Heart right ventricle (tissue), 16 donors: ENCODE measurements at regions of chr18 and their contacts with region 1.

Region 1: GRCh38 chr18:1585879-1586488 is 681.3 kb downstream of the ADCYAP1 start:
- DNase-seq: no peak
- ATAC-seq: peak in 2 of 8 donors; percentile 51 to 76
- H3K4me3 ChIP-seq: no peak overlapping the region
- H3K27ac ChIP-seq: no peak overlapping the region
- H3K4me1 ChIP-seq: no peaks in the 10 kb centered on the region
- H3K27me3 ChIP-seq: peaks cover 0 to 8% (median 0%) of the 10 kb centered on the region in 7 donors
- CTCF ChIP-seq: peak in 8 of 9 donors; percentile 30 to 69 (median 60)

Region 2: DNA sequence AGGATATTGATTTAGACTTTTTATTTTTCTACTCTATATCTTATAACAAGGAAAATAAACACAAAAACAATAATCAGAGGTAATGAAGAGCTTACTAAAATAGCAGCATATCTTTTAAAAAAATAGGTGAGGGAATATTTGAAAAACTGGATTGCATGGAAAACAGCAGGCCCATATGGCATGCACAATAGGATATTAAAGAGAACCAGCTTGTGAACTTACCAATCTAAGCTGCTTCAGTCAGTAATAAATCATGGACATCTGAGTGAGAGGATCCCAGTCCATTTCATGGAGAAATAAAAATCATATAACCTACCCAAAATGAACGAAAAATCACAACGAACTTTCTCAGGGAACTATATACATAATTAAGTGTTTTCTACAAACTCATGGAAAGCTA is 46.7 kb before region 1 on chr18:
- intact Hi-C with region 1: no loop called
- DNase-seq: no peak
- ATAC-seq: no peak
- H3K4me3 ChIP-seq: no peak overlapping the region
- H3K27ac ChIP-seq: no peak overlapping the region
- H3K4me1 ChIP-seq: no peaks in the 10 kb centered on the region
- H3K27me3 ChIP-seq: peaks cover 0 to 4% (median 0%) of the 10 kb centered on the region in 7 donors
- CTCF ChIP-seq: no peak

Region 3: GRCh38 chr18:1663879-1664705 is 78.1 kb after region 1 on chr18:
- intact Hi-C with region 1: loop called in 2 of 10 experiments (anchors 10 kb)
- DNase-seq: peak; percentile 15 to 35
- ATAC-seq: peak in 4 of 8 donors; percentile 23 to 43 (median 32)
- H3K4me3 ChIP-seq: no peak overlapping the region
- H3K27ac ChIP-seq: no peak overlapping the region
- H3K4me1 ChIP-seq: peaks cover 0 to 10% (median 4%) of the 10 kb centered on the region in 9 donors
- H3K27me3 ChIP-seq: no peaks in the 10 kb centered on the region
- CTCF ChIP-seq: peak in 8 of 9 donors; percentile 30 to 72 (median 50)

Region 4: GRCh38 chr18:2104620-2105462 is 518.9 kb after region 1 on chr18:
- intact Hi-C with region 1: loop called in 1 of 10 experiments (anchors 10 kb)
- DNase-seq: peak; percentile 25 to 41
- ATAC-seq: peak in 4 of 8 donors; percentile 58 to 76 (median 66)
- H3K4me3 ChIP-seq: no peak overlapping the region
- H3K27ac ChIP-seq: no peak overlapping the region
- H3K4me1 ChIP-seq: no peaks in the 10 kb centered on the region
- H3K27me3 ChIP-seq: peaks cover 0 to under 1% (median 0%) of the 10 kb centered on the region in 7 donors
- CTCF ChIP-seq: peak; percentile 27 to 83 (median 68)

Region 5: DNA sequence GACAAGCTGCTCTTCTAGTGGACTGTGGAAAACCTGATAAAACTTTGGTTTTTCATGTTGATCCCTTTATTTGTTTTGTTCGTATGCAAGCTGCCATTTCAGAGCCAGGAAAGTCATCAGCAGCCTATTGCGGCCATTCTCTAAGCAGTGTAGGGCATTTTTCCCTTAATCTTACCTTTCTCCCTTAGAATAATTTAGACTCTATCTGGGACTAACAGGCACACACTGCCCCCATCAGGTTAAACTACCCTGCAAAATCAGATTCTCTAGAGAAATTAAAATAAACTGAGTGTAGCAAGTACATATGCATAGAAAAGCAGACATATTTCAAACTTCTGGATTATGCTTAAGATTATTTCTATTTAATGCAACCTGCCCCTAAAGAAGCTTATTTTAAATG is 637.9 kb after region 1 on chr18:
- intact Hi-C with region 1: loop called in 9 of 10 experiments (anchors 5 to 10 kb)
- DNase-seq: peak in 1 of 2 donors; percentile 26
- ATAC-seq: peak in 1 of 8 donors; percentile 51
- H3K4me3 ChIP-seq: peak overlapping the region in 6 of 10 donors; percentile 6 to 40 (median 29)
- H3K27ac ChIP-seq: no peak overlapping the region
- H3K4me1 ChIP-seq: no peaks in the 10 kb centered on the region
- H3K27me3 ChIP-seq: peaks cover 0 to 7% (median 0%) of the 10 kb centered on the region in 7 donors
- CTCF ChIP-seq: peak; percentile 23 to 70 (median 58)

Region 6: DNA sequence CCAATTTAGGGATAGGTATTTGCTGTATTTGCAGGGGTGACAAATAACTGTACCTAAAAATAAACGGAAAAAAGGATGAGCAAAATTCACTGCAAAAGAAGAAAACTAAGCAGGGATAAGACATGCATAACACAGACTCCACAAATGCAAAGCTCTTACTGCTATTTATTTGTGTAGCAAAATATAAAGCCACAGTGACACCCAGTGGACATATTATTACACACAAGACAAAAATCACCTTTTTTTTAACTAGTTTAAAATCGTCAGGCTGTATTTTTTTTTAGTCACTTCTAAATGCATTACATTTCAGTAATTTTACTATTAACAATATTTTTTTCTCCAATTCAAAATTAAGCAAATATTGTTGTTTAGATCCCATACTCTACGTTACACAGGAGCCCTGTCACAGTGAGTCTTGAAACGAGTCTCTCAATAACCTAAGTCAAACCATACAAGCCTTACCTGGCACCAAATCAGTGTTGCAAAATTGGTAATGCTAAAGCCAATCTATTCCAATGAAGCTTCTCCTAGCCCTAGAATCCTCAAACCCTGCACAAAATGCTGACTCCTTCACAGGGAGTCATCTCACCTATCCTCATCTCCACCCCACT is 961.6 kb after region 1 on chr18:
- intact Hi-C with region 1: loop called in 8 of 10 experiments (anchors 5 to 10 kb)
- DNase-seq: no peak
- ATAC-seq: peak in 2 of 8 donors; percentile 42 to 55
- H3K4me3 ChIP-seq: no peak overlapping the region
- H3K27ac ChIP-seq: no peak overlapping the region
- H3K4me1 ChIP-seq: no peaks in the 10 kb centered on the region
- H3K27me3 ChIP-seq: no peaks in the 10 kb centered on the region
- CTCF ChIP-seq: peak; percentile 36 to 72 (median 61)